ENCODE measurements at regions of chr3 and their contacts with region 1.

Region 1: GRCh38 chr3:119885746-119886530 is 104.0 kb downstream of the NR1I2 start:
- DNase-seq: no peak
- ATAC-seq: no peak
- H3K4me3 ChIP-seq: no peak overlapping the region
- H3K27ac ChIP-seq: no peak overlapping the region
- H3K4me1 ChIP-seq: no peaks in the 10 kb centered on the region
- H3K27me3 ChIP-seq: no peaks in the 10 kb centered on the region
- CTCF ChIP-seq: no peak

Region 2: GRCh38 chr3:119912220-119912619 is 26.3 kb after region 1 on chr3:
- intact Hi-C with region 1: no loop called
- DNase-seq: no peak
- ATAC-seq: no peak
- H3K4me3 ChIP-seq: no peak overlapping the region
- H3K27ac ChIP-seq: no peak overlapping the region
- H3K4me1 ChIP-seq: peaks cover 0 to 34% (median 13%) of the 10 kb centered on the region in 9 donors
- H3K27me3 ChIP-seq: no peaks in the 10 kb centered on the region
- CTCF ChIP-seq: no peak

Region 3: DNA sequence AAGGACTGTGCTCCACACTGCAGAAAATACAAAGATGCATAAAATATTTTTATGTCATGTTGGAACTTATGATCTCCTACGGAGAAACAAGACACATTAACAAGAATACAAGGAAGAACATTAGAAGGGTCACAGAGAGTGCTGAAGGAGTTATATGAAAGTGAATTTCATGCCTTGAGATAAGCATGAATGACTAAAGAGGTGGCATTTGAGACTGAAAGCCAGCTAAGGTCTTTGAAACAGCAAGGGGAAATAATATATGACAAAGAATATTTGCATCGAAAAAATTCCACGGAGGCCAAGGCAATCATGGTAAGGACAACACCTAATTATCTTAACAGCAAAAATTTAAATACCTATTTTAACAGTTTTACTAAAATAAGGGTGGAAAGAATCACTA is 195.8 kb after region 1 on chr3:
- intact Hi-C with region 1: no loop called
- DNase-seq: no peak
- ATAC-seq: no peak
- H3K4me3 ChIP-seq: no peak overlapping the region
- H3K27ac ChIP-seq: no peak overlapping the region
- H3K4me1 ChIP-seq: peaks cover 0 to 89% (median 40%) of the 10 kb centered on the region in 9 donors
- H3K27me3 ChIP-seq: no peaks in the 10 kb centered on the region
- CTCF ChIP-seq: no peak

Region 4: GRCh38 chr3:120102674-120103073 is 216.7 kb after region 1 on chr3:
- intact Hi-C with region 1: loop called in 5 of 10 experiments (anchors 5 to 10 kb)
- DNase-seq: peak in 1 of 2 donors; percentile 16
- ATAC-seq: peak; percentile 39 to 89 (median 59)
- H3K4me3 ChIP-seq: no peak overlapping the region
- H3K27ac ChIP-seq: peak overlapping the region in 4 of 10 donors; percentile 1 to 53 (median 16)
- H3K4me1 ChIP-seq: peaks cover 0 to 15% (median 2%) of the 10 kb centered on the region in 9 donors
- H3K27me3 ChIP-seq: no peaks in the 10 kb centered on the region
- CTCF ChIP-seq: no peak